Transverse colon (tissue), 4 donors: ENCODE measurements at regions of chr3 and their contacts with region 1.

Region 1: DNA sequence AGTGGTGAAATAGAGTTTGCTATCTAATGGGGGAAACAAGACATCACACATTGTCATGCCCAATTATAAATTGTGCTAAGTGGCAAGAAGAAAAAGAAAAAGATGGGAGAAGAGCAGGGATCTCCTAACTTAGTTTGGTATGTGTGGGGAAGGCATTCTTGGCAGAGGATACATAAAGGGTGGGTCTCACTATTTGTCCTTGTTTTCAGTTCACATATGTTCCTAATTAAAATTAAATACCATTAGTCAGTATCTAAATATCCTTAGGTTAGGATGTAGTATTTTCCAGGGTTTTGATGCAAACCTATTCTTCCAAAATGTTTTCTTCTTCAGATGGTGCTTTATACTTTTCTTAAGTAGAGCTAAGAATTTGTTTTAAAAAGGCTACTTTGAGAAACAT is 173.7 kb downstream of the B3GALNT1 start:
- DNase-seq: no peak
- H3K4me3 ChIP-seq: no peak overlapping the region
- H3K27ac ChIP-seq: no peak overlapping the region
- H3K4me1 ChIP-seq: peaks cover 0 to 5% (median 0%) of the 10 kb centered on the region in 4 donors
- H3K27me3 ChIP-seq: no peaks in the 10 kb centered on the region
- CTCF ChIP-seq: no peak
- EP300 ChIP-seq: no peak
- POLR2A ChIP-seq: no peak

Region 2: DNA sequence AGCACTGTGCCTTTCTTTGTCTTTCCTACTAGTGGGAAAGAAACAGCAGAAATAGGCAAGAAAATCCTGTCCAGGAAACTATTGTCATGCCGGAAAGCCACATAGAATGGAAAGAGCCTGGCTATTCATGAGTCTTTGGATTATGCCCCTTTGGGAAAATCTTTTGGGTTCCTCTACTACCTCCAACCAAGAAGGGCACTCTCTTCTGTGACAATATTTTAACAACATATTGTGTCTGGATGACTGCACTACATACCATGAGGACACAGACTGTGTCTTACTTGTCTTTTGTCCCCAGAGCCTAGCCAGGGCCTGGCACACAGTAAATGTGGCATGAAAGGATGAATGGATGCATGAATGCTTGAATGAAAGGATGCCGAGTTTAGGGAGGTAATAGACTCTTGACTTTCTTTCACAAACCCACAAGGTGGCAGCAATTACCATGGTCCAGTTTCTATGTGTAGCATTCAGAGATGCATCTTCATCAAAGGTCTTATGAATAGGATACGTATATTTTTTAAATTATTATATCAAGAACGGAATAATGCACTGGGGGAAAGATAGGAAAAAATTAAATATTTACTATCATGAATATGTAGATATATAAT is 224.2 kb before region 1 on chr3:
- in situ Hi-C with region 1: loop called (anchors 5 to 10 kb)
- intact Hi-C with region 1: no loop called
- DNase-seq: peak; percentile 20
- H3K4me3 ChIP-seq: no peak overlapping the region
- H3K27ac ChIP-seq: no peak overlapping the region
- H3K4me1 ChIP-seq: no peaks in the 10 kb centered on the region
- H3K27me3 ChIP-seq: peaks cover 7% of the 10 kb centered on the region
- CTCF ChIP-seq: peak; percentile 49 to 62 (median 56)
- EP300 ChIP-seq: no peak
- POLR2A ChIP-seq: no peak